ENCODE measurements at regions of chr6 and their contacts with region 1.

Region 1: DNA sequence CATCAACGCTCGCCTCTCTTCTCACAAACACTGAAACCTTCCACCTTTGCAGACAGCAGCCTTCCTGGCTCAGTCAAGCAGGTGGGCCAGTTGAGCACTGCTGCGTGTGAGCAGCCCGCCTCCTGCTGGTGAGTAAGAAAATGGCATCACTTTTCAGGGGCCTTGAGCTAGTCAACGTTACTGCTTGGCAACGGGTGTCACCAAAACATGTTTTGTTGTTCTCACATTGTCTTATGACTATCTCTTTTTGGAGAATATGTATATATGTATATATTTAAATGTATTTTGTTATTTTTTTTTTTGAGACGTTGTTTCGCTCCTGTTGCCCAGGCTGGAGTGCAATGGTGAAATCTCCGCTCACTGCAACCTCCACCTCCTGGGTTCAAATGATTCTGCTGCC is 97.0 kb upstream of the AGPAT4 start:
- DNase-seq: peak; percentile 82
- ATAC-seq: peak; percentile 90
- H3K4me3 Mint-ChIP-seq: no peak overlapping the region
- H3K27ac Mint-ChIP-seq: no peak overlapping the region
- H3K4me1 Mint-ChIP-seq: no peaks in the 10 kb centered on the region
- H3K27me3 Mint-ChIP-seq: no peaks in the 10 kb centered on the region

Region 2: DNA sequence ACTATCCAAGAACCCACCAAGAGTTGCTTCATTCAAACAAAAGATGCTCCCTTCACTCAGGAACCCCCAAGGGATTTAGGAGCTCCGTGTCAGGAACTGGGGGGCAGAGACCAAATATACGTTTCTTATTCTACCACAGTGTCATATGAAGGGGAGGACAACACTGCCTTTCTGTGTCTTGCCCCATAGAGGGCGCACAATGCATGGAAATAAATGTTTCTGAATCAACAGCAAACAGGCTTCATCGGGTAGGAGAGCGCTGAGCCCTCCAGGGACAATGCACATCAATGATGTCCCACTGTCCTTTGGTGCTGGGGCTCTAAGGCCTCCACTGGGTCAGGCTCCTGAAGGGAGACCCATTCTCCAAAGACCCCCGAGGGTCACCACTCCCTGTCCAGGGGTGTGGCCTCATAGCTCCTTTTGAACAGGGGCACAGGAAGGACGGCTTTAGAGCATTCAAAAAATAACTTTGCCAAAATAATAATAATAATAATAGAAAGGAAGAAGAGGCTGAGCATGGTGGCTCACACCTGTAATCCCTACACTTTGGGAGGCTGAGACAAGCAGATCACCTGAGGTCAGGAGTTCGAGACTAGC is 637.7 kb before region 1 on chr6:
- CTCF ChIA-PET with region 1: interaction called, 12 read pairs
- POLR2A ChIA-PET with region 1: no interaction called
- intact Hi-C with region 1: loop called (anchors 1 to 5 kb)
- DNase-seq: peak; percentile 51
- ATAC-seq: peak; percentile 57
- H3K4me3 Mint-ChIP-seq: no peak overlapping the region
- H3K27ac Mint-ChIP-seq: no peak overlapping the region
- H3K4me1 Mint-ChIP-seq: no peaks in the 10 kb centered on the region
- H3K27me3 Mint-ChIP-seq: peaks cover 7% of the 10 kb centered on the region

Region 3: DNA sequence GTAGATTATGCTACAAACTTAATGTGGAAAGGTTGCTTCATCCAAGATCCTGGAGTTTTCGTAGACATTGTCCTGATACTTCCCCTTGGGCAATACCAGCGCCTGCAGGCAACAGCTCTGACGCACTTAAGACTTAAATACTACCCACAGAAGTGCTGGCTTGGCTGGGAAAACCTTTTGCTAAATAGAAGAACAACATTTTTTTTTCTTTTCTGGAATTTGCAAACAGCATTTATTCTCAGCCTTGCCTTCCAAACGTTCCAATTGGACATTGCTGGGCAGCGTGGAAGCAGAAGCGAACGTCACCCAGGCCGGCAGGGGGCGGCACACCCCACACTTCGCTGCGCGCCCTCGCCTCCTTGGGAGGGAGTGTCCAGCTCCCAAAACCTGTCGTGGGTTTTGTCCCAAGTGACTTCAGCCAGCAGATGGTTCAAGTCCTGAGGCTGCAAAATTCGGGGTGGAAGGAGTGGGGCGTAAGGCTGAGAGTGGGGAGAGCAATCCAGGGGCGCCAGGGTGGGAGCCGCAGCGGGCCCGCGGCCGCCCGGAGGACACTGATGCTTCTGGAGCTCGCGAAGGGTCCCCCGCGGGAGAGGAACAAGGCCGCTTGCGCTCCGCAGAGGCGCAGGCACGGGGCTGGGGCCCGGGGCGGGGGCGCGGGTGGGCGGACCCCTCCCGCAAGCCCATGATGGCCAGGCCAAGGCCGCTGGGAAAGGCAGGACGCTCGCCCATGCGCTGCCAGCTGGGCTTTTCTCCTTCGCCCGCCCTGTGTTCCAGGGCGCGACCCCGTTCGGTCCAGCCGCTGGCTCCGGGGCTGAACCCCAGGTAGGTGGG is 440.1 kb before region 1 on chr6:
- CTCF ChIA-PET with region 1: interaction called, 200 read pairs
- POLR2A ChIA-PET with region 1: interaction called, 3 read pairs
- intact Hi-C with region 1: loop called (anchors 1 kb)
- DNase-seq: peak; percentile 77
- ATAC-seq: peak; percentile 81
- H3K4me3 Mint-ChIP-seq: peak overlapping the region; percentile 34
- H3K27ac Mint-ChIP-seq: no peak overlapping the region
- H3K4me1 Mint-ChIP-seq: peaks cover 2% of the 10 kb centered on the region
- H3K27me3 Mint-ChIP-seq: peaks cover 37% of the 10 kb centered on the region

Region 4: GRCh38 chr6:161048641-161049040 is 322.2 kb before region 1 on chr6:
- CTCF ChIA-PET with region 1: no interaction called
- POLR2A ChIA-PET with region 1: no interaction called
- intact Hi-C with region 1: no loop called
- DNase-seq: no peak
- ATAC-seq: no peak
- H3K4me3 Mint-ChIP-seq: no peak overlapping the region
- H3K27ac Mint-ChIP-seq: no peak overlapping the region
- H3K4me1 Mint-ChIP-seq: peaks cover 23% of the 10 kb centered on the region
- H3K27me3 Mint-ChIP-seq: no peaks in the 10 kb centered on the region

Region 5: GRCh38 chr6:161101517-161101916 is 269.4 kb before region 1 on chr6:
- CTCF ChIA-PET with region 1: interaction called, 14 read pairs
- POLR2A ChIA-PET with region 1: no interaction called
- intact Hi-C with region 1: loop called (anchors 5 to 10 kb)
- DNase-seq: no peak
- ATAC-seq: no peak
- H3K4me3 Mint-ChIP-seq: no peak overlapping the region
- H3K27ac Mint-ChIP-seq: no peak overlapping the region
- H3K4me1 Mint-ChIP-seq: peaks cover 10% of the 10 kb centered on the region
- H3K27me3 Mint-ChIP-seq: no peaks in the 10 kb centered on the region

Region 6: DNA sequence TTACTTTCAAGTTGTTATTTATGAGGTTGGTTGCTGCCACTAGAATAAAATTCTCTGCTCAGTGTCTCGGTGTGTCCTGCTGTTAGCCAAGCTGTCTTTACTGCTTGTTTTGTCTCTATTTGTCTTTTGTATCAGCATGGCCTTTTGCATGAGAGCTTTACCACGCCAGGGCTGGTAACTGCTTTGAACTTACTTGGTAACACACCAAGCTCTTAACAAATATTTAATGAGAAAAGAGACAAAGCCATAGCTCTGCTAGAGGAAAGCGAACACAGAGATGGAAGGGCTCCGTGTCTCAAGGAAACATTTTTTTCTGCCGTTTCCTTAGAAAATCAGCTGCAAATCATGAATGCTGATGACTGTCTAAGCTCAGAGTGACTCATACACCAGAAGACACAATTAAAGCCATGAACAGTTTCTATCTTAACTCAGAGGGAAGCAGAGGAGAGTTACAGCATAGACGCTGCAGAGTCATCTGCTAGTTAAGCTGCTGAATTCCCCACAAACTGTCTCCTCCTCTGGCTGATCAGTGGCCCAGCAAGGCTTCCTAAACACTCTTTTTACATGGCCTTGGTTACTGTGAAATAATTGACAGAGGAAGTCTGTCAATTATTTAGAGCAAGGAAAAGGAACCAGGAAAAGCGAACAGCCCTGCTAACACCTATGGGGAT is 141.8 kb before region 1 on chr6:
- CTCF ChIA-PET with region 1: interaction called, 6 read pairs
- POLR2A ChIA-PET with region 1: no interaction called
- intact Hi-C with region 1: loop called in 1 of 2 experiments (anchors 5 kb)
- DNase-seq: no peak
- ATAC-seq: peak; percentile 94
- H3K4me3 Mint-ChIP-seq: no peak overlapping the region
- H3K27ac Mint-ChIP-seq: peak overlapping the region; percentile 61
- H3K4me1 Mint-ChIP-seq: peaks cover 35% of the 10 kb centered on the region
- H3K27me3 Mint-ChIP-seq: no peaks in the 10 kb centered on the region

Region 7: DNA sequence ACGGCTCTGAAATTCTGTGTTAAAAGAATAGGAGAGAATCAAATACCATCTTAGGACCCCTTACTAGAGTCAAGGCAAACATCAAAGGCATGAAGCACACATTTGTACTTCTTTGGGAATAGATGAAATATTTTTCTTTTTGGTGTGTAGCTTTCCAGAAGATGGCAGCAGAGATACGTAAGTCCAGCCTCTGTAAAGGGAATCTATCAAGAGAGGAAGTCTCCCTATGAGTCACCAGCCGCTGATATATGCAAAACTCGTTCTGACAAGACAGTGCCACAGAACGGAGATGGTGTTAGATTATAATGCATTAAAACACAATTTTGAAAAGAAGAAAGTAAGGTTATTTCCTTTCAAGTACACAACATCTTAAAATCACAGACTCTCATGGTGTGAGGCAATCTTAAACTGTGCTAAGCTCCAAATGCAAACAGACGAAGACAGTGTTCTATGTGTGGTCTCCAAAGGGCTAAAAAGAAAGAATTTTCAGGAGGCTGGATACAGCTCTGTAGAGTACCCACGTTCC is 23.0 kb after region 1 on chr6:
- CTCF ChIA-PET with region 1: interaction called, 10 read pairs
- POLR2A ChIA-PET with region 1: no interaction called
- intact Hi-C with region 1: no loop called
- DNase-seq: peak; percentile 75
- ATAC-seq: peak; percentile 99
- H3K4me3 Mint-ChIP-seq: no peak overlapping the region
- H3K27ac Mint-ChIP-seq: no peak overlapping the region
- H3K4me1 Mint-ChIP-seq: no peaks in the 10 kb centered on the region
- H3K27me3 Mint-ChIP-seq: peaks cover 5% of the 10 kb centered on the region